ENCODE measurements at regions of chr11 and their contacts with region 1.

Region 1: GRCh38 chr11:126440792-126441514 is 85.5 kb downstream of the ST3GAL4 start:
- DNase-seq: peak; percentile 76 to 91 (median 90)
- ATAC-seq: peak; percentile 48 to 73
- H3K4me3 ChIP-seq: no peak overlapping the region
- H3K27ac ChIP-seq: no peak overlapping the region
- H3K4me1 ChIP-seq: no peaks in the 10 kb centered on the region
- H3K27me3 ChIP-seq: no peaks in the 10 kb centered on the region

Region 2: DNA sequence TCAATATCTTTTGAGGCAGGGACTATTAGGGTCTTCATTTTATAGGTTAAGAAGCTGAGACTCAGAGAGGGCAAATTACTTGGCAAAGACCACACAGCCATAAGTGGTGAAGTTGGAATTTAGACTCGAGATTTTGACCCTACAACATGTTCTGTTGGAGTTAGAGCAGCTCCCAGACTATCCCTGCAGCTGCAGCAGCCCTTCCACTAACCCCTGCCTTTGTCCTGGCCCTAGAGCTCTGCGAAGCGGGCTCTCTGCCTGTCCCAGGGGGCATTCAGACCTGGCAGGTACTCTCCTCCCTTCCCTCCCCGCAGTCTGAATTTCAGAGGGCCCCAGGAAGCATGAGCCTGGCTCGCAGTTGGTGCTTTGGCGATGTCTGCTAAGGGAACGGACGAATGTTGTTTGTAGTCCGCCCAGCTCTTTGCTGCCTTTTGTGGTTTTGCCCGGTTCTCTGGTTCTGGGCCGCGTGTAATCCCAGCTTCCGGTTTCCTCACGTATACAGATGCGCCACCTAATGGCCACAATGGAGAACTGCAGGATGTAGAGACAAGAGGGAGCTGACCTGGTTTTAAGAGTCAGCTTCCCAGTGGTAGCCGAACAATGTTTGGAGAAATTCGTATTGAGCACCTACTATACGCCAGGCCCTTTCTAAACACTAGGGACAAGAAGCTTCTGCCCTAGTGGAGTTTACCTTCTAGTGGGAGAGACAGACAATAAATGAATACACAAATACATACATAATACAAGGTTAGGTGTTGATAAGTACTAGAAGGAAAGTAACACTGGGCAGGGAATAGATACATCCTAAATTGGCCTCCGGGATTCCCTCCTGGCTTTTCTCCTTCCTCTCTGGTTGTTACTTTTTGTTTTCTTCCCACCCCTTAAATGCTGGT is 39.7 kb after region 1 on chr11:
- intact Hi-C with region 1: loop called (anchors 1 to 5 kb)
- DNase-seq: peak; percentile 83 to 92 (median 89)
- ATAC-seq: peak; percentile 85 to 89
- H3K4me3 ChIP-seq: no peak overlapping the region
- H3K27ac ChIP-seq: peak overlapping the region; percentile 89
- H3K4me1 ChIP-seq: peaks cover 2% of the 10 kb centered on the region
- H3K27me3 ChIP-seq: no peaks in the 10 kb centered on the region

Region 3: GRCh38 chr11:126989942-126990715 is 549.2 kb after region 1 on chr11:
- intact Hi-C with region 1: loop called in 1 of 4 experiments (anchors 5 kb)
- DNase-seq: peak; percentile 74 to 90 (median 87)
- ATAC-seq: peak; percentile 85 to 87
- H3K4me3 ChIP-seq: no peak overlapping the region
- H3K27ac ChIP-seq: no peak overlapping the region
- H3K4me1 ChIP-seq: peaks cover 3% of the 10 kb centered on the region
- H3K27me3 ChIP-seq: no peaks in the 10 kb centered on the region

Region 4: DNA sequence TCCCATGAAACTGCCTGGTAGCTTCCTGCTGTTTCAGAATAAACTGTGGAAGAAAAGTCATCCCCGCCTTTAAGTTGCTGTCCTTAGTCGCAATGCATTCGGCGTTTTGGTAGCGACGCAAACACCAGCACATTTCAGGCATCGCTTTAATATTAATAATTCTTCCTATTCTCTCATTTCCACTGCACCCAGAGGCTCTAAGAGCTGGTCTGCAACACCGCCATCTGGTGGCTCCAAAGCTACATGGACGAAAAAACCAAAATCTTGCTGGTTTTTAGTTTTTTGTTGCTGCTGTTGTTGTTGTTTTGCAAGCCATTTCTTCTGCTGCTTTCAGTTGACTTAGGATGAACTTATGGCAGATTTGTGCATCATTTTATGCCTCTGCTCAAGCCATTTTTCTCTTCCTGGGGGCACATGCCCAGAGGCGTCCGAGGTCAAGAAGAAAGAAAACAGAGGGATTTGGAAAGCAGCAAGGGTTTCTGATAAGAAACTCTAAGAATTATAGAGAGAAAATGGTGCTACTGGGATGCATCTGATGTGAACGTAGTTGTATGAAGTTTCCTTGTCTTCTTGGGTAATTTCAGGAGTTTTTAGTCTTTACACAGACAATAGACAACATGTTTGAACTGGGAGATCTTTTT is 905.0 kb after region 1 on chr11:
- intact Hi-C with region 1: loop called in 2 of 4 experiments (anchors 5 to 10 kb)
- DNase-seq: peak; percentile 26 to 67 (median 37)
- ATAC-seq: peak in 1 of 2 donors; percentile 51
- H3K4me3 ChIP-seq: no peak overlapping the region
- H3K27ac ChIP-seq: no peak overlapping the region
- H3K4me1 ChIP-seq: no peaks in the 10 kb centered on the region
- H3K27me3 ChIP-seq: no peaks in the 10 kb centered on the region